T-cell (primary cell): ENCODE measurements at regions of chr19 and their contacts with region 1.

Region 1: DNA sequence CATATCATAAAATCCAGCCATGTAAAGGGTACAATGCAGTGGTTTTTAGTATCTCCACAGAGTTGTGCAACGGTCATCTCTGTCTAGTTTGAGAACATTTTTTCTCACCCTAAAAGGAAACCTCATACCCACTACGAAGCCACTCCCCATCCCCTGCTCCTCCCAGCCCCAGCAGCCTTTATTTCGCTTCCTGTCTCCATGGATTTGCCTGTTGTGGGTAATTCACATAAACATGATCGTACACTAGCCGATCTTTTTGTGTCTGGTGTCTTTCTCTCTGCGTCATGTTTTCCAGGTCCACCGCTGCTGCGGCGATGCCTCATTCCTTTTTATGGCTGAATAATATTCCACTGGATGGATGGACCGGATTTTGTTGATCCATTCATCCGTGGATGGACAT is 28.6 kb downstream of the BICRA start:
- DNase-seq: no peak
- ATAC-seq: no peak
- H3K4me3 ChIP-seq: no peak overlapping the region
- H3K4me3 Mint-ChIP-seq: no peak overlapping the region
- H3K27ac ChIP-seq: no peak overlapping the region
- H3K27ac Mint-ChIP-seq: no peak overlapping the region
- H3K4me1 ChIP-seq: peaks cover 0 to 5% of the 10 kb centered on the region in 2 experiments
- H3K4me1 Mint-ChIP-seq: peaks cover 45 to 56% (median 55%) of the 10 kb centered on the region in 3 donors
- H3K27me3 ChIP-seq: no peaks in the 10 kb centered on the region
- H3K27me3 Mint-ChIP-seq: no peaks in the 10 kb centered on the region

Region 2: GRCh38 chr19:47561440-47562057 is 76.0 kb before region 1 on chr19:
- CTCF ChIA-PET with region 1: interaction called in 1 of 2 experiments, 11 read pairs
- POLR2A ChIA-PET with region 1: no interaction called
- DNase-seq: no peak
- ATAC-seq: no peak
- H3K4me3 ChIP-seq: no peak overlapping the region
- H3K4me3 Mint-ChIP-seq: no peak overlapping the region
- H3K27ac ChIP-seq: no peak overlapping the region
- H3K27ac Mint-ChIP-seq: no peak overlapping the region
- H3K4me1 ChIP-seq: no peaks in the 10 kb centered on the region
- H3K4me1 Mint-ChIP-seq: peaks cover 0 to 2% (median 0%) of the 10 kb centered on the region in 3 donors
- H3K27me3 ChIP-seq: no peaks in the 10 kb centered on the region
- H3K27me3 Mint-ChIP-seq: no peaks in the 10 kb centered on the region

Region 3: DNA sequence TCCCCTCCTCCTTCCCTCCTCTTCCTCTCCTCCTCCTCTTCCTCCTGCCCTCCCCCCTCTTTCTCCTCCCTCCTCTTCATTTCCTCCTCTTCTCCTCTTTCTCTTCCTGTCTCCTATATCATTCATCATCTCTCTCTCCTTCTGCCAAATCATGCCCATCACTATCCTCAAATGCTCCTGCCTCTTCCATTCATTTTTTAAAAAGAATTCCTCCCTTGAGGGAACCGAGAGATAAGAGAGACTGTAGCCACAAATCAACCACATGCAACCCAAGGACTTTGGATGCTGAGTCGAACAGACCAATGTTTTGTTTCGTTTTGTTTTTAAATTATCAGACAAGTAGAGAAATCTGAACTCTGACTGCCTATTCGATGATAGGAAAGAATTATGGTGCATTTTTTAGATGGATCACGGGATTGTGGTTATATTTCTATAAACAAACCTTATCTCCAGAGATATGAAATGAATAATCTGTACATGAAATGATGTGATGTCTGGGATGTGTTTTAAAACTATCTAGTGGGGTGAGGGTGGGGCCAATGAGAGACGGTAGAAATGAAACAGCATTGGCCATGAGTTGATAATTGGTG is 55.1 kb before region 1 on chr19:
- CTCF ChIA-PET with region 1: no interaction called
- POLR2A ChIA-PET with region 1: no interaction called
- DNase-seq: no peak
- ATAC-seq: peak in 1 of 4 experiments; percentile 30
- H3K4me3 ChIP-seq: no peak overlapping the region
- H3K4me3 Mint-ChIP-seq: peak overlapping the region; percentile 40 to 66 (median 48)
- H3K27ac ChIP-seq: peak overlapping the region; percentile 11
- H3K27ac Mint-ChIP-seq: peak overlapping the region; percentile 88 to 93
- H3K4me1 ChIP-seq: peaks cover 22 to 41% of the 10 kb centered on the region in 2 experiments
- H3K4me1 Mint-ChIP-seq: peaks cover 35 to 46% (median 44%) of the 10 kb centered on the region in 3 donors
- H3K27me3 ChIP-seq: peaks cover 0 to 7% of the 10 kb centered on the region in 2 experiments
- H3K27me3 Mint-ChIP-seq: no peaks in the 10 kb centered on the region

Region 4: DNA sequence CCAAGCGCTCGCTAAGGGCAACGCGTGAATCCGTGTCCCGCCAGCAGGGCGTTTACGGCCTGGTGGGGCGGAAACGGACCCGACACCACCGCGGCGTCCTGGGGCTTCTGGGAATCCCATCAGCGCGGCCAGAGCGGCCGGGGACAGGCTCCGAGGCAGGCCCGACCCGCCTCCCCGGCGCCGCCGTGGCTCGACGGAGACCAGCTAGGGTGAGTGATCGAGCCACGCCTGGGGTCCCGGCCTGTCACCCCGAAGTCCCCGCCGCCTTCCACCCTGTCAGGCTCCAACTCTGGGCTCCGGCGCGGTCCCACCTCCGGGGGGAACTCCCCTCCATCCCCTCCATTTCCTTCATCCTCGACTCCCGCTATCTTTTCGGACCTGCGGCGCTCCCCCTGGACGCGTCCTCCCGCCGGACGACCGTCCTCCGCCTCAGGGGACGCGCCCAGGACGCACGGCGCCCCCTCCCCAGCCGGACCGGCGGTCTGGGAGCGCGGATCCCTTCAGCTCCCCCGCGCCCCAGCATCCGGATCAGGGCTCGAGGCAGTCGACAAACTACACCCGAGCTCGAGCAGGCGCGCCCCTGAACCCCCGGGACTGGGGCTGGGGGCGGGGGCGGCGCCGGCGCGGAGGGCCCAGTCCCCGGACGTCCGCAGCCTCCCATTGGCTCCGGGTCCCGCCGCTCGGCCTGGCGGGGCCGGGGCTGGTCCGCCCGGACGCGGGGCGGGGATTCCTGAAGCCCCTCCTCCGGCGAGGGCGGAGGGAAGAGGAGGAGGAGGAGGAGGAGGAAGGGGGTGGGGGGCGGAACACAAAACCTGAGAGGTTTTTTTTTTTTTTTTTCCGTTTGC is 29.3 kb before region 1 on chr19:
- CTCF ChIA-PET with region 1: no interaction called
- POLR2A ChIA-PET with region 1: no interaction called
- DNase-seq: peak; percentile 86 to 98 (median 93)
- ATAC-seq: peak; percentile 87 to 91 (median 88)
- H3K4me3 ChIP-seq: peak overlapping the region; percentile 79 to 84
- H3K4me3 Mint-ChIP-seq: peak overlapping the region; percentile 78 to 84 (median 80)
- H3K27ac ChIP-seq: peak overlapping the region; percentile 49
- H3K27ac Mint-ChIP-seq: peak overlapping the region; percentile 55 to 74
- H3K4me1 ChIP-seq: peaks cover 6 to 38% of the 10 kb centered on the region in 2 experiments
- H3K4me1 Mint-ChIP-seq: peaks cover 25 to 32% (median 29%) of the 10 kb centered on the region in 3 donors
- H3K27me3 ChIP-seq: no peaks in the 10 kb centered on the region
- H3K27me3 Mint-ChIP-seq: no peaks in the 10 kb centered on the region